Activated T-helper 1 cell treated with anti-CD3 and anti-CD28 coated beads, Interleukin-12 subunit alpha, Interleukin-12 subunit beta, Interleukin-2, Interleukin-4 antibody, amounts not matched to agents 30 ng/mL and 10 ng/mL and 1 ng/mL, durations not matched to agents 14 hours and 24 hours and 36 hours (primary cell): ENCODE measurements at regions of chr6 and their contacts with region 1.

Region 1: GRCh38 chr6:118843685-118844390 is 50.1 kb upstream of the ASF1A start:
- DNase-seq: peak; percentile 11
- H3K4me3 Mint-ChIP-seq: peak overlapping the region; percentile 34
- H3K27ac Mint-ChIP-seq: peak overlapping the region; percentile 19
- H3K4me1 Mint-ChIP-seq: peaks cover 27% of the 10 kb centered on the region
- H3K27me3 Mint-ChIP-seq: no peaks in the 10 kb centered on the region

Region 2: DNA sequence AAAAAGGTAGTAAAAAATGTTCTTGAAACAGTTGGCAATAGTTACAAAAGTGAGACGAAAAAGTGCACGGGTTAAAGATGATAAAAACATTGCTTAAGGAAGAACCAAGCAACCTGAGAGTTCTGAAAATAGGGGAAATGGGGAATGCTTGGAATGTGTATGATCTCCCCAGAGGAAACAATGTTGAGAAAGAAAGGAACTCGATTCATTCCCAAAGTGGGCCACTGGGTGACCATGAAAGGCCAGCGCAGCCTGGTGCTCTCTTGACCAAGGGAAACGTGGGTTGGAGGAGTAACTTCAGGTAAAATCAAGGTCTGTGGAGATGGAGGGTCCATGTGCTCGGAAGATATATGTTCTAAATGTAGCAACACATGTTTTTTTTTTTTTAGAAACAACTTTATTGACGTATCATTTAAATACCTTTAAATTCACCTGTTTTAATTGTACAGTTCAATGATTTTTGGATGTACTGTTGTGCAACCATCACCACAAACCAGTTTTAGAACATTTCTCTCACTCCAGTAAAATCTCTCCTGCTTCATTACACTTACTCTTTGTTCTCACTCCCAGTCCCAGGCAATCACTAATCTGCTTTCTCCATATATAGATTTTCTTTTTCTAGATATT is 157.9 kb before region 1 on chr6:
- intact Hi-C with region 1: loop called (anchors 1 kb)
- DNase-seq: no peak
- H3K4me3 Mint-ChIP-seq: no peak overlapping the region
- H3K27ac Mint-ChIP-seq: peak overlapping the region; percentile 69
- H3K4me1 Mint-ChIP-seq: peaks cover 68% of the 10 kb centered on the region
- H3K27me3 Mint-ChIP-seq: no peaks in the 10 kb centered on the region

Region 3: DNA sequence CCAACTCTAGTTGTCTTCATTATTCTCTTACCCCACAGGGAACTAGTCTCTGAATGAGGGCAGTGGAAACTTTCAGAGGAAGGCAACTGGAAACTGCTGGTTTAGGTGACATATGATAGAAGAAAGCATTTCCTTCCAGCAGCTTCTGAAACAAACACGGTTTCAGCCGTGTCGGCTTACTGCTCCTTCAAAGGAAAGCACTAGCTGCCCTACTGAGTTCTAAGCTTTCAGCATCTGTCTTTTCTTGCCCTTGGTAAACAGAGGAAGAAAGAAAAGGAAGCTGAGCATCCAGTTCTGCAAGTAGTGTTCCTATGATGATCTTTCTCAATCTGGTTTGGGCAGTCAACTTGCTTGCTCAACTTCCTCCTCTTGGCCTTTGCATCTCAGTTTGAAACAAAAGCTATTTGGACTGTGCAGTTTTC is 74.9 kb before region 1 on chr6:
- intact Hi-C with region 1: loop called (anchors 2 kb)
- DNase-seq: peak; percentile 31
- H3K4me3 Mint-ChIP-seq: peak overlapping the region; percentile 1
- H3K27ac Mint-ChIP-seq: peak overlapping the region; percentile 80
- H3K4me1 Mint-ChIP-seq: peaks cover 29% of the 10 kb centered on the region
- H3K27me3 Mint-ChIP-seq: no peaks in the 10 kb centered on the region

Region 4: GRCh38 chr6:118869894-118870589 is 26.2 kb after region 1 on chr6:
- intact Hi-C with region 1: loop called (anchors 1 kb)
- DNase-seq: no peak
- H3K4me3 Mint-ChIP-seq: no peak overlapping the region
- H3K27ac Mint-ChIP-seq: peak overlapping the region; percentile 65
- H3K4me1 Mint-ChIP-seq: peaks cover 24% of the 10 kb centered on the region
- H3K27me3 Mint-ChIP-seq: no peaks in the 10 kb centered on the region

Region 5: GRCh38 chr6:118918326-118918725 is 74.5 kb after region 1 on chr6:
- intact Hi-C with region 1: no loop called
- DNase-seq: no peak
- H3K4me3 Mint-ChIP-seq: no peak overlapping the region
- H3K27ac Mint-ChIP-seq: no peak overlapping the region
- H3K4me1 Mint-ChIP-seq: no peaks in the 10 kb centered on the region
- H3K27me3 Mint-ChIP-seq: no peaks in the 10 kb centered on the region

Region 6: DNA sequence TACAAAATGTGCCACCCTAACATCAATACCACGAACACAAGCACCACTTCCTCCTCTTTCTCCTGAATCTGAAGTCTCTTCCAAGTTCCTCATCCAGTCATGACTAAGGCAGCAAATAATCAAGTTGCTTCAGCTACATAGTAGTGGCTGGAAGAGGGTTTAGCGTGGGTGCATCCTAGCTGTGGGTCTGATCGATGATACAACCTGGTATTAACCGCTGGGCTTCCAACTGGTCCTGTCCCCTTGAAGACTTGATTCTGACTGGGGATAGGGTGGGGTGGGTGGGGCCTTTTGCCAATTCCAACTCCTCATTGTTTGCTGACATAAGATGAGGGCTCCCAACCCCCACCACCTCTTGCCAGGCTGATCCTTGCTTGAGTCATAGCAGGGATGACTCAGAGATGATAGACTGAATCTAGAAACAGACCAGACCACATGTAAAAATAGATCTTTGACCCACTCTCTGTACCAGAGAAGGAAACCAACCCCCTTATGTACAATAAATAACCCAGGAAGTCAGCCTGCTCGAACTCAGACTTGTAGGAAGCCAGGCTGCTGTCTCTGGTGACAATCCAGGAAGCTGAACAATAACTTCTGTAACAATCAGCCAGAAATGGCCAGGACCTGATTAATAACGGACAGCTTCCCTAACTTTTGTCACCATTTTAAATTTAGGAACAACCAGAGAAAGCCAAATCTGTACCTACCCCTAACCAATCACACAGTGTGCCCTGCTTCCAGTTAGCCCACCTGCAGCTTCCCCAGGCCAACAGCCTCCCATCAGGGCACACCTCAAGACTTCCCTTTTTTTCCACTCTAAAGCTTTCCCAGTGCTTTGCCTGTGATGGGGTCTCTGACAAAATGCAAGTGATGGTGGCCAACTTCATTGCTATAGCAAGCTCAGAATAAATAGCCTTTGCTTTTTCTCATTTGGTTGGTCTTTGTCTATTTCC is 303.5 kb after region 1 on chr6:
- intact Hi-C with region 1: loop called (anchors 1 kb)
- DNase-seq: peak; percentile 27
- H3K4me3 Mint-ChIP-seq: no peak overlapping the region
- H3K27ac Mint-ChIP-seq: peak overlapping the region; percentile 77
- H3K4me1 Mint-ChIP-seq: peaks cover 62% of the 10 kb centered on the region
- H3K27me3 Mint-ChIP-seq: no peaks in the 10 kb centered on the region